A549 (cell line): ENCODE measurements at regions of chr2 and their contacts with region 1.

Region 1: DNA sequence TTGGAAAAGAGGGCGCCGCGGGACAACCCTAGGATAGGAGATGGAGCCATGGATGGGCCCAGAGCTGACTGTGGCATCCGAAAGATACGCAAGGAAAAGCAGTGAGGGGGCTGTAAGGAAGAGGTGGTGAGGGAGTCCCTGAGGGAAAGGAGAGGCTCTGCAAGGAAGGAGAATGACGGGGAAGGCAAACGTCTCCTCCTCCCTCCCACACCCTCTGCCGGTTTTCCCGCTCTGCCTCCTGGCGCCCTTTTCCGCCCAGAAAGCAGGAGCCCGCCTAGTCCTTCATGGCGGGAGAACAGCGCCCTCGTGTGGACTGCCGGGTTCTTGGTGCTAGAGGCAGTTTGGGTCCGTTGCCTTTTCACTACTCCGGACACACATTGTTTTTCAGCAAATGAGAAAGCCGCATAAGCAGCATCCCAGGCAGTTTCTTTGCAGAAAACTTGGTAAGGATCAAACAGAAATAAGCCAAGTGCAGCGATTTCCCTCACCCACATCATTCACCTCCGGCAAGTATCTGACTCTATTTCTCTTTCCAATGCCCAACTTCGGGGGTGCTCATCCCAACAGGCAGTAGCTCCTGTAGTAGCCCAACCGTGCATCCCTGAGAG is 200.4 kb downstream of the INO80D start:
- DNase-seq: peak; percentile 64 to 81
- ATAC-seq: peak; percentile 92 to 99
- H3K4me3 ChIP-seq: no peak overlapping the region
- H3K27ac ChIP-seq: peak overlapping the region in 1 of 2 experiments; percentile 58; a peak in 1 of 6 replicates
- H3K4me1 ChIP-seq: no peaks in the 10 kb centered on the region
- CTCF ChIP-seq: peak; percentile 95
- EP300 ChIP-seq: no peak
- POLR2A ChIP-seq: no peak
- RAD21 ChIP-seq: peak; percentile 92 to 93

Region 2: DNA sequence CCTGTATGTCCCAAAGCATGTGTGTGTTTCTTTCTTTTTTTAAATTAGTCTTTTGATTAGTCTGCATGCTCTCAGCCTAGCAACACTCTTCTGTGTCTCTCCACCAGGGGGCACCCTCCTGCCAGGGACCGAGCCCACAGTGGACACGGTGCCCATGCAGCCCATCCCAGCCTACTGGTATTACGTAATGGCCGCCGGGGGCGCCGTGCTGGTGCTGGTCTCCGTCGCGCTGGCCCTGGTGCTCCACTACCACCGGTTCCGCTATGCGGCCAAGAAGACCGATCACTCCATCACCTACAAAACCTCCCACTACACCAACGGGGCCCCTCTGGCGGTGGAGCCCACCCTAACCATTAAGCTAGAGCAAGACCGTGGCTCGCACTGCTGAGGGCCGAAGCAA is 109.5 kb before region 1 on chr2:
- CTCF ChIA-PET with region 1: interaction called, 14 read pairs
- POLR2A ChIA-PET with region 1: no interaction called
- DNase-seq: peak in 1 of 2 experiments; percentile 63
- ATAC-seq: peak; percentile 61 to 83; a peak in 3 of 6 replicates
- H3K4me3 ChIP-seq: no peak overlapping the region
- H3K27ac ChIP-seq: no peak overlapping the region
- H3K4me1 ChIP-seq: peaks cover 9% of the 10 kb centered on the region
- CTCF ChIP-seq: peak; percentile 69
- EP300 ChIP-seq: no peak
- POLR2A ChIP-seq: no peak
- RAD21 ChIP-seq: peak; percentile 61 to 66

Region 3: DNA sequence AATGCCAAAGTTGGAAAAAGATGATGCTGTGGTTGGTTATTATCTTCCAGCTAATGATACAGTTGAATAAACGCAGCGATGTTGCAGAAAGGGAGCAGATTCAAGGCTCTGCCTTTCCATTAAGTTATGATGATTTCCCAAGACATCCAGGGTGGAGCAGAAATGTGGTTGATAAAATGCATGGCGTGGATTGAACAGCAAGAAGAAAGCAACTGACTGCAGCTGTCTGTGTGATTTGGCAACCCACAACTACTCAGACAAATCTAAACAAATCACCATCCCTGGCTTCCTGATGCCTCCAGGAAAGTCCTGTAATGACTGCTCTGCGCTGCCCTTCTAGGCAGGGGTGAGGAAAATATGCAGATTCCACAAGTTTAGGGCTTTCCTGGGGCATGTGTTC is 37.0 kb before region 1 on chr2:
- CTCF ChIA-PET with region 1: no interaction called
- POLR2A ChIA-PET with region 1: no interaction called
- DNase-seq: no peak
- ATAC-seq: no peak; a peak in 1 of 6 replicates
- H3K4me3 ChIP-seq: no peak overlapping the region
- H3K27ac ChIP-seq: no peak overlapping the region
- H3K4me1 ChIP-seq: no peaks in the 10 kb centered on the region
- CTCF ChIP-seq: no peak
- EP300 ChIP-seq: no peak
- POLR2A ChIP-seq: no peak
- RAD21 ChIP-seq: no peak

Region 4: DNA sequence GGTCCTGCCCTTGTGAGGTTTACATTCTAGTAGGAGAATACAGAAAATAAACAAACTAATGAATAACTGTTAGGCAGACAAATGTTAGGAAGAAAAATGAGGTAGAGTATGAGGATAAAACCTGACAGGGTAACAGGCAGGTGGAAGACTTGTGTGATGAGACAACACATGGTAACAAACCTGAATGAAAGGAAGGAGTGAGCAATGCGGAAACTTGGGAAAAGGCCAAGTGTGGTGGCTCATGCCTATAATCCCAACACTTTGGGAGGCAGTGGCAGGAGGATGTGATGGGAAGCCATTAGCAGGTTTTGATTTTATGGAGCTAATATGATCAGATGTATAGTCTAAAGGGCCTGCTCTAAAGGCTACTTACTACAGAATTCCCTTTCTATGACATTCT is 126.2 kb after region 1 on chr2:
- CTCF ChIA-PET with region 1: no interaction called
- POLR2A ChIA-PET with region 1: no interaction called
- DNase-seq: no peak
- ATAC-seq: no peak
- H3K4me3 ChIP-seq: no peak overlapping the region
- H3K27ac ChIP-seq: no peak overlapping the region
- H3K4me1 ChIP-seq: no peaks in the 10 kb centered on the region
- CTCF ChIP-seq: no peak
- EP300 ChIP-seq: no peak
- POLR2A ChIP-seq: no peak
- RAD21 ChIP-seq: no peak